ENCODE measurements at regions of chr2 and their contacts with region 1.

Region 1: DNA sequence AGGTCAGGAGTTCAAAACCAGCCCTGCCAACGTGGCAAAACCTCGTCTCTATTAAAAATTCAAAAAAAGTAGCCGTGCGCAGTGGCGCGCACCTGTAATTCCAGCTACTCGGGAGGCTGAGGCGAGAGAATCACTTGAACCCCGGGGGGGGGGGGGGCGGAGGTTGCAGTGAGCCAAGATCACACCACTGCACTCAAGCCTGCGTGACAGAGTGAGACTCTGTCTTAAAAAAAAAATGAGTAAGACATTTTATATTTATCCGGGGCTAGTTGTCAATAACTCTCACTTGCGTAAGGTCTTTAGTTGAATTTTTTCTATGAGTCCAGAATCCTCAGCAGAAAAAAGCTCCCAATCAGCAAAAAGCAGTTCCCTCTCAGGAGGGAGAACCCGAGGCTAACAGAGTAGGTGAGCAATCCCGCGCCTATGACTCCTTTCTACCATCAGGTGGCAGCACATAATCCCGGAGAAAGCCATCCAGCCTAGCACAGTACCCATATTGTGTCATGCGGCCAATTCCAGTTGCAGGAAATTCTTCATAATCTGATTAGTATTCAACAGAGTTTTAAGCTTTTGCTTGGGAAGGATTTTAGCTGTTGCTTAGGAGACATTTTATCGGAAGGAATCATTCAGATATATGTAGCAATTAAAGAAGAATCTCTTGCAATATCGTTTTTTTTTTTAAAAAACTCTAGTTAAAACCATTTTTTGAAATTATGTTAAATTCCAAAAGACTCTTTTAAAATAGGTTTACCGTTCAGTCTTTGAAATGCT is 11.9 kb upstream of the CRYGA start:
- DNase-seq: peak; percentile 19
- ATAC-seq: peak; percentile 94
- H3K4me3 Mint-ChIP-seq: no peak overlapping the region
- H3K27ac Mint-ChIP-seq: no peak overlapping the region
- H3K4me1 Mint-ChIP-seq: peaks cover 4% of the 10 kb centered on the region
- H3K27me3 Mint-ChIP-seq: peaks cover 14% of the 10 kb centered on the region
- CTCF ChIP-seq: peak; percentile 62

Region 2: DNA sequence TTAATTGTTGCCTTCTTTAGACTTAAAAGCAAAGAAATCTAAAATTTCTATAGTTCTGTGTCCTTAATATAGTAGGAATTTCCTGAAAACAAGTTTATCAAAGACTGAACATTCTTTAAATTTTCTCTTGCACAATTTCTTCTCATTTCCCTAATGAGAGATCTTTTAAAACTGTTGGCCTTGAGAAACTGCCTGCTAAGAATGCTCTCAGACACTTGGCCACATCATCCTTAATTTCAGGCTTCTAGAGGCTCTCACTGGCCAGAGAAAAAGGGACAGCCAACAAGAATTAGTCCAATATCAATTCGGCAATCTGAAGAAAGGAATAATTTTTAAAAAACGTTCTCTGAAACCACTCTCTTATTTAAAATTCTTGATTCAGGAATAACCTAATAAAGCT is 812.5 kb before region 1 on chr2:
- CTCF ChIA-PET with region 1: no interaction called
- POLR2A ChIA-PET with region 1: no interaction called
- intact Hi-C with region 1: no loop called
- DNase-seq: no peak
- ATAC-seq: no peak
- H3K4me3 Mint-ChIP-seq: no peak overlapping the region
- H3K27ac Mint-ChIP-seq: no peak overlapping the region
- H3K4me1 Mint-ChIP-seq: no peaks in the 10 kb centered on the region
- H3K27me3 Mint-ChIP-seq: peaks cover 3% of the 10 kb centered on the region
- CTCF ChIP-seq: no peak

Region 3: GRCh38 chr2:208373460-208374089 is 198.3 kb after region 1 on chr2:
- CTCF ChIA-PET with region 1: no interaction called
- POLR2A ChIA-PET with region 1: no interaction called
- intact Hi-C with region 1: loop called (anchors 5 kb)
- DNase-seq: no peak
- ATAC-seq: peak; percentile 52
- H3K4me3 Mint-ChIP-seq: no peak overlapping the region
- H3K27ac Mint-ChIP-seq: no peak overlapping the region
- H3K4me1 Mint-ChIP-seq: peaks cover 2% of the 10 kb centered on the region
- H3K27me3 Mint-ChIP-seq: peaks cover 2% of the 10 kb centered on the region
- CTCF ChIP-seq: peak; percentile 98